Activated CD4-positive, alpha-beta memory T cell treated with anti-CD3 and anti-CD28 coated beads for 36 hours (primary cell): ENCODE measurements at regions of chr14 and their contacts with region 1.

Region 1: DNA sequence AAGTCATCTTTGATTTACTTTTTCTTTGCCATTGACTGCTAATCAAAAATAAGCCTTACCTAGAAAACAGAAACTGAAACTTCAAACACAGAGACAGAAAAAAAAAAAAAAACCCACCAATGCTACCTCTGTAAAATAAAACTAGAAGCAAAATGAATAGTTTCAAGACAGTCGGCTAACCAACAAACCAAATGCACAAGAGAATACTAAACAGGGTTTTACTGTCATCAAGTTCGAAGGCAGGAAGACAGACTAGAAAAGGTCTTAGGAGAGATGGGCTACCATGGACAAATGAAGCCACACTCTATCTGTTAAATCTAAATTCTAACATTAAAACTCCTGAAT is 59.5 kb downstream of the SEL1L start:
- DNase-seq: no peak
- H3K4me3 Mint-ChIP-seq: peak overlapping the region; percentile 36
- H3K27ac Mint-ChIP-seq: peak overlapping the region; percentile 80
- H3K4me1 Mint-ChIP-seq: peaks cover 48% of the 10 kb centered on the region
- H3K27me3 Mint-ChIP-seq: no peaks in the 10 kb centered on the region

Region 2: DNA sequence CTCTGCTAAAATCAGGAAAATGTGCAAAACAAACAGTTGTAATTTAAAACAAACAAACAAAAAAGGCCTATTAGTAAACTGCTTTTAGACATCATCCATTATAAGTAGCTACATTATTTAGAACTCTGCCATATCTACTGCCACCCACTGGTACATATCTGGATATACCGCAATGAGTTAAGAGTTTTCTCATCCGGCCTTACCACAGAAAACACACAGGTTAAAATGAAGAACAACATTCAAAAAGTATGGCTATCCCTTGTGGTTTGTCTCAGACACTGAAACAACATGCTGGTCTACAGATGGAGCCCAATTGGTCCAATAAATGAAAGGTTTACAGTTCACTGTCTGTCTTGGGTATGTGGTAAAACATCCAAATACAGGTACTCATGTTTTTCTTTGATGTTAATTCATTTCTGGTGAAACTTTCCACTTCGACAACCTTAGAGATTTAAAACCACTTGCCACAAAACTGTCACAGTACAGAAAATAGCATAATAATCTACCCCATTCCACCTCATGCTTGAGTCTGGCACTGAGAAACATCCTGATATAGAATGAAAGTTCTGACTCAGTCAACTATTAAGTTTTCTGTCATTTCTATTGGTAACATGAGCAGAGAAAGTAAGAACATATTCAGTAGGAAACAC is 886.9 kb before region 1 on chr14:
- CTCF ChIA-PET with region 1: no interaction called
- POLR2A ChIA-PET with region 1: no interaction called
- intact Hi-C with region 1: loop called (anchors 10 kb)
- DNase-seq: no peak
- H3K4me3 Mint-ChIP-seq: no peak overlapping the region
- H3K27ac Mint-ChIP-seq: peak overlapping the region; percentile 67
- H3K4me1 Mint-ChIP-seq: peaks cover 17% of the 10 kb centered on the region
- H3K27me3 Mint-ChIP-seq: no peaks in the 10 kb centered on the region

Region 3: DNA sequence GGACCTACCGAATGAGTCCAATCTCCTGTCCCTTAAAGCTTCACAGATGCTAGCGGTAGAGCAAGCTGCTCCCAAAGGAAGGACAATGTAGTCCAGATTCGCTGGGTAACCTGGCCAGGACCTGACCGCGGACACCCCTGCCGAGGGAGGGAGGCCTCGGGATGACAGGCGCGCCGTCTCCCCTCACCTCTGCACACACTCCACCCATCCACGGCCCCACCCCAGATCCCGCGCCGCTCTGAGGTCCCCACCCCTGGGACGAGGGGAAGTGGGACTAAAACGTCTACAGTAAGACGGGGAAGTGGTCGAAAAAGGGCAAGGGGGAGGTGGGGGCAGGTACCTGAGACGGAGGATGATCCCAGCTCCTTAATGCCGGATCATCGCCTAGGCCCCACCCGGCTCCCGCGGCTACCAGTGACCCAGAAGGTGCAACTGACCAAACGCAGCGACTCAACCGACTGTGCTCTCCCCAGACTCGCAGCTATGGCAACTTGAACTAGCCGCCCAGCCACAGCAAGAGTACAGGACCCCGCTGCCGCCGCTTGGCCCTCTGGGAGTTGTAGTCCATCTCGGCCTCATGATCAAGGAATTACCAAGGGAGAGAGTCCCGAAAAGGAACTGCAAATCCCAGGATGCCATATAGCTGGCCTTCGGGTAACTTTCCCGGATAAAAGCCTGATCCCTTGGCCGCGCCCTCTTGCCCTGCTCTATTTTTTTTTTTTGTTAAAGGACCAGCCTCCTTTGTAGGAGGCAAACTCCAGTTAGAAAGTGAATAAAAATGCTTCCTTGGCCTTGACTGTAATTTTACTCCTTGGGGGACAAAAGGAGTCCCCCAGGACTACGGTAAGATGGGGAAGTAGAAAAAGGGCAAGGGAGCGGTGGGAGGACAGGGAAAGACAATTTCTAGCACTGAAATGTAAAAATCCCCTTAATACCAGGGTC is 532.6 kb before region 1 on chr14 and contains the start of gene CEP128:
- CTCF ChIA-PET with region 1: no interaction called
- POLR2A ChIA-PET with region 1: no interaction called
- intact Hi-C with region 1: loop called (anchors 5 kb)
- DNase-seq: peak; percentile 92
- H3K4me3 Mint-ChIP-seq: peak within 1 kb of the TSS; percentile 88
- H3K27ac Mint-ChIP-seq: peak within 1 kb of the TSS; percentile 93
- H3K4me1 Mint-ChIP-seq: peaks cover 37% of the 10 kb centered on the region
- H3K27me3 Mint-ChIP-seq: no peaks in the 10 kb centered on the region
- total RNA-seq, gene CEP128: 19.4 to 22.8 TPM

Region 4: GRCh38 chr14:81447021-81447764 is 26.9 kb before region 1 on chr14:
- CTCF ChIA-PET with region 1: no interaction called
- POLR2A ChIA-PET with region 1: no interaction called
- intact Hi-C with region 1: no loop called
- DNase-seq: no peak
- H3K4me3 Mint-ChIP-seq: no peak overlapping the region
- H3K27ac Mint-ChIP-seq: no peak overlapping the region
- H3K4me1 Mint-ChIP-seq: no peaks in the 10 kb centered on the region
- H3K27me3 Mint-ChIP-seq: peaks cover 19% of the 10 kb centered on the region

Region 5: DNA sequence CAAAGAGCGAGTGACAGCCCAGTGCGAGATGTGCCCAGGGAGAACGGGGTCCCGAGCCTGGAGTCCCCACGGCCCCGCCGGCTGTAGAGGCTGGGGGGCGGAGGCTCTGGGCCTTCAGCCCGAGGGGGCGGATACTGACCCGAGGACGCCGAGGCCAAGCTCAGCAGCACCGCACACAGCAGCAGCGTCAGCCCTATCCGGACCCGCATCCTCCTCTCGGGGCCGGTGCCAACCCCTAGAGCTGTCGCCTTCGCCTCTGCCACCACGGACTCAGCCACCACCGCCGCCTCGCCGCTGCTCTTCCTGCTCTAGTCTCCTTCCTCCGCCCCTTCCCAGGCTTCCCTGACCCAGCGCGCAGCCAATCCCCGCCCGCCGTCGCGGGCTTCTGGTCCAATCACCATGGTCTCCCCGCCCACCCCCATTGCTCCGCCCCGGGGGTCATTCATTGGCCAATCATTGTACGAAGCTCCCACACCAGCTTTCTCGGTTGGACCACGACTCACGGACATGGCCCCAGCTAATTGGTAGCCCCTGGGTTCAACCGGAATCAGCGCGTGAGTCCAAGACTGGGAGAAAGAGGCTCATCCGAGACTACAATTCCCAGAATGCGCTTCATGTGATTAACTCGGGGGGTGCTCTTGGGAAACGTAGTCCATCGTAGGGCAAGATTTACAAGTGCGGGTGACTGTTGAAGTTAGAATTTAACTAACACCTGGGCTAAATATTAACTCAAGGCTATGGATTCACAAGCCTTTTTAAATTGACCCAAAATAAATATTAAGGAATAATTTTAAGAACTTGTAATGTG is 59.6 kb after region 1 on chr14 and contains the start of gene SEL1L:
- CTCF ChIA-PET with region 1: no interaction called
- POLR2A ChIA-PET with region 1: no interaction called
- intact Hi-C with region 1: loop called (anchors 1 kb)
- DNase-seq: peak; percentile 100
- H3K4me3 Mint-ChIP-seq: peak within 1 kb of the TSS; percentile 90
- H3K27ac Mint-ChIP-seq: peak within 1 kb of the TSS; percentile 75
- H3K4me1 Mint-ChIP-seq: peaks cover 59% of the 10 kb centered on the region
- H3K27me3 Mint-ChIP-seq: no peaks in the 10 kb centered on the region
- total RNA-seq, gene SEL1L: 49.0 to 50.2 TPM

Region 6: DNA sequence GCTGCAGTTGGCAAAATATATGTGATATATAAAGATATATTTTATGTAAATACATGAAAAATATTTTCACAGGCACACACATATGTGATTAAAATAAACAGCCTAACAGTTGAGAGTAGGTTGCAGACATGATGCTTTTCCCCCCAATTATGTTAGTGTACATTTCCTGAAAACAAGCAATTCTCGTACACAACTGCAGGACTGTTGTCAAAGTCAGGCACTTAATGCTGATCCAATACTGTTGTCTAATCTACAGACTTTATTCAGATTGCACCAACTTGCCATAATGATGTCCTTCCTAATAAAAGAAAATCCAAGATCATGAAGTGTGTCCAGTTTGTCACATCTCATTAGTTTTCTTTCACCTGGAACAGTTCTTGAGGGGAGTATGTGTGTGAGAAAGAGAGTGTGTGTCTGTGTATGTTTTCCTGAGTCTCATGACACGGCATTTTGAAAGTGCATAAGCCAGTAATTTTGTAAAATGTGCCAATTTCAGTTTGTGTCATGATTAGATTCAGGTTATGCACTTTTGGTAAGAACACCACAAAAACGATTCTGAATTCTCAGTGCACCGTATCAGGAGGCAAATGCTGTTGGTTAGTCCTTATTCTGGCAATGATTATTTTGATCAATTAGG is 76.0 kb after region 1 on chr14:
- CTCF ChIA-PET with region 1: no interaction called
- POLR2A ChIA-PET with region 1: no interaction called
- intact Hi-C with region 1: loop called (anchors 1 kb)
- DNase-seq: no peak
- H3K4me3 Mint-ChIP-seq: no peak overlapping the region
- H3K27ac Mint-ChIP-seq: no peak overlapping the region
- H3K4me1 Mint-ChIP-seq: peaks cover 23% of the 10 kb centered on the region
- H3K27me3 Mint-ChIP-seq: peaks cover 2% of the 10 kb centered on the region